ENCODE measurements at regions of chr2 and their contacts with region 1.

Region 1: DNA sequence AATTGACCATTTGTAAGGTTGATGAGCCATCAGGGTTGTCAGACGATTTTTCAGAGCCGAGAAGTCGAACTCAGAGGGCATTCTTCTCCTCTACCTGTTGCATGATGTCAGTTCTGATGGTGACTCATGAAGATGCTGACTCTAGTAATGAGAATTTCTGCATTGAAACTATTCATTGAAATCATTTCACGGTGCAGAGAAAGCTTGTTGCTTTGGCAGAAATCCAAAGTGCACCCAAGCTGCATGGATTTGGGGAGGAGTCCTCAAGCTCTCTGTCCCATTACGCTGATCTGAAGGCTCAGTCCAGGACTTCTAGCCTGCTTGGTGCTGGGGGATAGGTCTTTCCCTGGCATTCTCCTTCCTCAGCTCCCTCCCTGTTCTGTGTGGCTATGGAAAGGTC is 125.7 kb upstream of the PXDN start:
- DNase-seq: no peak
- ATAC-seq: no peak
- H3K4me3 ChIP-seq: no peak overlapping the region
- H3K4me3 Mint-ChIP-seq: no peak overlapping the region
- H3K27ac ChIP-seq: no peak overlapping the region
- H3K27ac Mint-ChIP-seq: no peak overlapping the region
- H3K4me1 ChIP-seq: no peaks in the 10 kb centered on the region
- H3K4me1 Mint-ChIP-seq: no peaks in the 10 kb centered on the region
- H3K27me3 ChIP-seq: peaks cover 0 to 2% of the 10 kb centered on the region in 2 experiments
- H3K27me3 Mint-ChIP-seq: peaks cover 9% of the 10 kb centered on the region
- CTCF ChIP-seq: no peak

Region 2: GRCh38 chr2:1707771-1708418 is 162.1 kb before region 1 on chr2:
- CTCF ChIA-PET with region 1: no interaction called
- POLR2A ChIA-PET with region 1: no interaction called
- intact Hi-C with region 1: loop called in 1 of 2 experiments (anchors 5 kb)
- DNase-seq: no peak
- ATAC-seq: no peak
- H3K4me3 ChIP-seq: no peak overlapping the region
- H3K4me3 Mint-ChIP-seq: no peak overlapping the region
- H3K27ac ChIP-seq: no peak overlapping the region
- H3K27ac Mint-ChIP-seq: no peak overlapping the region
- H3K4me1 ChIP-seq: no peaks in the 10 kb centered on the region
- H3K4me1 Mint-ChIP-seq: no peaks in the 10 kb centered on the region
- H3K27me3 ChIP-seq: no peaks in the 10 kb centered on the region
- H3K27me3 Mint-ChIP-seq: peaks cover 4% of the 10 kb centered on the region
- CTCF ChIP-seq: no peak